ENCODE measurements at regions of chr12 and their contacts with region 1.

Region 1: DNA sequence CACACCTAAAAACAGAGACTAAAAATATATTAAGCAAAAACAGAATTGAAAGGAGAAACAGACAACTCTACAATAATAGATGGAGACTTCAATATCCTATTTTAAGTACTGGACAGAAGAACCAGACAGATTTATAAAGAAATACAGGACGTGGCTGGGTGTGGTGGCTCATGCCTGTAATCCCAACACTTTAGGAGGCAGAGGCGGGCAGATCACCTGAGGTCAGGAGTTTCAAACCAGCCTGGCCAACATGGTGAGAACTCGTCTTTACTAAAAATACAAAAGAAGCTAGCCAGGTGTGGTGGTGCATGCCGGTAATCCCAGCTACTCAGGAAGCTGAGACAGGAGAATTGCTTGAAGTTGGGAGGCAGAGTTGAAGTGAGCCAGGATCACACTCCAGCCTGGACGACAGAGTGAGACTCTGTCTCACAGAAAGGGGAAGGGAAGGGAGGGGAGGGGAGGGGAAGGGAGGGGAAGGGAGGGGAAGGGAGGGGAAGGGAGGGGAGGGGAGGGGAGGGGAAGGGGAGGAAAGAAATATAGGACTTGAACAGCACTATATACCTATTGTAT is 53.0 kb downstream of the CDK17 start:
- DNase-seq: no peak
- H3K4me3 ChIP-seq: peak overlapping the region; percentile 48
- H3K27ac ChIP-seq: peak overlapping the region; percentile 41
- H3K4me1 ChIP-seq: peaks cover 34% of the 10 kb centered on the region
- CTCF ChIP-seq: no peak

Region 2: GRCh38 chr12:96335270-96335669 is 11.9 kb before region 1 on chr12:
- CTCF ChIA-PET with region 1: interaction called, 5 read pairs
- POLR2A ChIA-PET with region 1: interaction called, 12 read pairs
- intact Hi-C with region 1: no loop called
- DNase-seq: no peak
- H3K4me3 ChIP-seq: no peak overlapping the region
- H3K27ac ChIP-seq: no peak overlapping the region
- H3K4me1 ChIP-seq: peaks cover 10% of the 10 kb centered on the region
- CTCF ChIP-seq: no peak

Region 3: DNA sequence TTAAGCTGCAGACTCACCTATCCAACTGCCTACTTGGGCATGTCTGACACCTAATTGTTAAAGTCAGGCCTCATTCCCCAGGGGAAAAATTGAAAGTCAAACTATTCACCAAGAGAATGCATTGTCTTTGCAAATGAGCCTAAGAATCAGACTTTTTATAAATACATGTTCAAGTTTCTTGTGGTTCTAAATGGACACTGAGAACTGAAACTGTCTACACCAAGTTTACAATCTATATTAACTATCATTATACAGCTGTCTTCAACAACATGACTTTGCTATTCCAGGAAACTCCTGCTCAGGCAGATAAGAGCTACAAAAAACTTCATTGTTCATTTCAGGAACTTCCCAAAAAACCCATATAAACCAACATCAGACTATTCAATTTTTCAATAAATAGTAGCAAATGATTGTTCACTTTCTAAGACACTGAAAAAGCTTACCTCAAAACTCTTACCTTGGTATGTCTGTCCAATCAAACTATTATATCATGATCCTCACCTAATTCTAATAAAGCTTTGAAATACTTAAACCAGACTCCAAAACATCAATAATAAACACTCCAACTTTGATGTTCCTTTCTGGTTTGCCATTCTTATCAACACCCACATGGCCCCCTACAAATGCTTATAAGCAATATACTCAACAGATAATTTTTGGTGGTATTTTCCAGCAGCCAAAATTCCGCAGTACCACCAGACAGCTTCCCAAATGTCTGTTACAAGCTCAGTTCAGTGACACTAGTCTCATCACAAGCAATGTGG is 28.8 kb after region 1 on chr12:
- CTCF ChIA-PET with region 1: no interaction called
- POLR2A ChIA-PET with region 1: interaction called, 23 read pairs
- intact Hi-C with region 1: no loop called
- DNase-seq: peak; percentile 37
- H3K4me3 ChIP-seq: peak overlapping the region; percentile 35
- H3K27ac ChIP-seq: peak overlapping the region; percentile 39
- H3K4me1 ChIP-seq: peaks cover 47% of the 10 kb centered on the region
- CTCF ChIP-seq: no peak